ENCODE measurements at regions of chr14 and their contacts with region 1.

Region 1: DNA sequence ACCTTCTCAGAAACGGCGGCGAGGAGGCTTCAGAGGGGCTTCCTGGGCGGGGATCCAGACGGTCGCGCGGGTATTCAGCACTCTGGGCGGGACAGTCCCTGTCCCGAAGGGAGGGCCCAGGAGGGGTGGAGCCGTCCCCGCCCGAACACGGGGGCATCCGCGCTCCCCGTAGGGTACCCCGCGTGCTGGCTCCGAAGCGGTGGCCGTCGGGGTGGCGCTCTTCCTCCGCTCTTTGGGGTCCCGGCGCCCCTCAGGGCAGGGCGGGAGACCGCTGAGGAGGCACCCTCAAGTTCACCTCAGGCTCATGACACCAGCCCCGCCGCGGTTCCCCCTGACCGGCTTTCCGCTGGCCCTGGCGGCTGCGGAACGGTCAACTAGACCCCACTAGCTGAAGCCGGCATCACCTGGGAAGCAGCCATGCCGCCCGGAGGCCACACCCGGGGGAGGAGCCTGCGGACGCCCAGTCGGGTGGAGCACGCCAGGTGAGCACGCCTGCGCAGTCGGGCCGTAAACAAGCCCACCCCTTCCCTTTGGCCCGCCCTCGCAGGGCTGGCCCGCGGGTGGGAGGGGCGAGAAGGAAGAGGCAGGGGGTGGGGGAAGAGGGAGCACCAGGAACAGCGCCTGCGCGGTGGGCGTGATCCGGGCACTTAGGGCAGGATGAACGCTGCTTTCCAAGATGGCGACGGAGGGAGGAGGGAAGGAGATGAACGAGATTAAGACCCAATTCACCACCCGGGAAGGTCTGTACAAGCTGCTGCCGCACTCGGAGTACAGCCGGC is at the start of gene WDR20:
- DNase-seq: peak; percentile 99
- H3K4me3 Mint-ChIP-seq: peak within 1 kb of the TSS; percentile 95
- H3K27ac Mint-ChIP-seq: peak within 1 kb of the TSS; percentile 94
- H3K4me1 Mint-ChIP-seq: peaks cover 24% of the 10 kb centered on the region
- H3K27me3 Mint-ChIP-seq: no peaks in the 10 kb centered on the region
- total RNA-seq, gene WDR20: 20.5 to 21.4 TPM

Region 2: GRCh38 chr14:101761032-101761880 is 378.2 kb before region 1 on chr14 and contains the start of gene PPP2R5C:
- CTCF ChIA-PET with region 1: no interaction called
- intact Hi-C with region 1: loop called (anchors 2 kb)
- DNase-seq: peak; percentile 85
- H3K4me3 Mint-ChIP-seq: peak within 1 kb of the TSS; percentile 91
- H3K27ac Mint-ChIP-seq: peak within 1 kb of the TSS; percentile 79
- H3K4me1 Mint-ChIP-seq: peaks cover 42% of the 10 kb centered on the region
- H3K27me3 Mint-ChIP-seq: no peaks in the 10 kb centered on the region
- total RNA-seq, gene PPP2R5C: 280 to 294 TPM

Region 3: DNA sequence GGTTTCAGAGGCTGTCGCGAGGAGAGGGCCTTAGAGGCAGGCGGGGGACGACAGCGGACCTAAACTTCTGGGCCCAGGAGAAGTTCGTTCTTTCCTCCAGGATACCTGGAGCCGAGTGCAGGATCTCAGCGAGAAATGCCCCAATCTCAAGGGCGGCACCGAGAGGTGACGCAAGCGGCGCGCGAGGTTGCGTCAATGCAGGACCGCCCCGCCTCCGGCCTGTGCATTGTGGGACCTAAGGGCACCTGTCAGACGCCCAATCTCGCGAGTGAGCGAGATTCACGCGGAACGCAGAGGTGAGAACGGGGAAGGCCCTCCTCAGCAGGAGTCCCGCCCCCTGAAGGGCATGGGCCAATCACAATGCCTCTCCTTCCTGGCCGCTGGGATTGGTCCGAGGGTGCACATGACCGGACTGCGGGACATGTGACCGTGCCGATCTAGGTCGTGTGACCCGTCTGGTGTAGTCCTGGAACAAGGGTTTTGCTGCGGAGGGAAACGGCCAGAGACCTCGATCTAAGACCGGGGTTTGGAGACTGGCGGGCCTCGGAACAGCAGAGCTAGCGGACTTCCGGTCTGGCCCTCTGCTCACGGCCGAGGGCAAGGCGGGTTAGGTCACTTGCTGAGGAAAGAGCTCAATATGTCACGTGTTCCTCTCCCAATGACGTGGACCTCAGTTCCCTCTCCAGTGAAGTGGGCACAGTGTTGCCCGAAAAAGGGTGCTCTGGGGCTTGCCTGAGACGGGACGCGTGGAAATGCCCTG is 191.4 kb before region 1 on chr14:
- CTCF ChIA-PET with region 1: no interaction called
- intact Hi-C with region 1: loop called (anchors 1 kb)
- DNase-seq: peak; percentile 100
- H3K4me3 Mint-ChIP-seq: peak overlapping the region; percentile 98
- H3K27ac Mint-ChIP-seq: peak overlapping the region; percentile 97
- H3K4me1 Mint-ChIP-seq: peaks cover 18% of the 10 kb centered on the region
- H3K27me3 Mint-ChIP-seq: peaks cover 20% of the 10 kb centered on the region

Region 4: GRCh38 chr14:102200690-102201352 is 61.4 kb after region 1 on chr14:
- CTCF ChIA-PET with region 1: no interaction called
- intact Hi-C with region 1: loop called (anchors 1 kb)
- DNase-seq: peak; percentile 20
- H3K4me3 Mint-ChIP-seq: no peak overlapping the region
- H3K27ac Mint-ChIP-seq: peak overlapping the region; percentile 2
- H3K4me1 Mint-ChIP-seq: peaks cover 61% of the 10 kb centered on the region
- H3K27me3 Mint-ChIP-seq: no peaks in the 10 kb centered on the region

Region 5: DNA sequence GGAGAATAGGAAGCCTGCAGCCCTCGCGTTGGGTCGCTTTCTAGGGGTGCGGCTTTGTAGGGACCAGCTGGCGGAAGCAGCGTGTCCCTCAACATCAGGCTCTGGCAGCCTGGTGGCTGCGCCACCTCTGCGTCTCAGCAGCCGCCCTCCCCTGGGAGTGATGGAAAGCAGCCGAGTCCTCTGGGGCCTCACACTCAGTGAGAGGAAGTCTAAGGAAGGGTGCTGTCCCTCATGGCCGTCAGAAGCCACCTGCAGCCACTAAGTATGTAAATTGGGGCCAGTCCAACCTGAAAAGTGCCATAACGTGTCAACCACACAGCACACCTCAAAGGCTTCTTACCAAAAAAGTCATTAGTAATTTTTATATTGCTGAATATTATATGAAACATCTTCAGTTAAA is 80.6 kb after region 1 on chr14:
- CTCF ChIA-PET with region 1: interaction called, 3 read pairs
- intact Hi-C with region 1: loop called (anchors 1 kb)
- DNase-seq: peak; percentile 69
- H3K4me3 Mint-ChIP-seq: no peak overlapping the region
- H3K27ac Mint-ChIP-seq: no peak overlapping the region
- H3K4me1 Mint-ChIP-seq: peaks cover 13% of the 10 kb centered on the region
- H3K27me3 Mint-ChIP-seq: no peaks in the 10 kb centered on the region

Region 6: DNA sequence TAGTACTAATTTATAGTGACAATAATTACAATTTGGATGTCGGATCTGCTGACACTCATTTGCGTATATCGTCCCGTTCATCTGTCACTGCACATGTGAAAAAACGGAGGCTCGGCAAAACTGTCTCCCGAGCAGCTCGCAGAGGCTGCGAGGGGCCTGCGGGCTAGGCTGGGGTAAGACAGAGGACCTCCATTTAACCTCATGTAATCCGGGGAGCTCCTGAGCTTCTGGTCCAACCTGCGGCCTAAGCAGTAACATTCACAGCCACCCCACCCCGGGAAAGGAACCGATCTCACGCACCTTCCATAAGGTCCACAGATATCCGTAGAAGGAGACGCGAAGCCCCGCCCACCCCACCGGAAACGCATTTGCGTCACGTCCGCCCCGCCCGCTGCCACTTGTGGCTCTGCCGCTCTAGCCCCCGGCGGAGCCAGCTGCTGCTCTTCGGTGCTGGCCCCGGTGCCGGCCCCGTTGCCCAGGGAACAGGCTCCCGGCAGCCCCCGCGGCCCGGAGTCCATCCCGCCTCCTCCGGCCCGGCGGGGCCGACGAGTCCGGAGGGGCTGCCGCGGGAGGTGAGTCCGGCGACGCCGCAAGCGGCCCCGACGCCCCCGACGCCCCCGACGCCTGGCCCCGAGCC is 223.2 kb after region 1 on chr14 and contains the starts of genes CINP and TECPR2:
- CTCF ChIA-PET with region 1: no interaction called
- intact Hi-C with region 1: loop called (anchors 2 kb)
- DNase-seq: peak; percentile 99
- H3K4me3 Mint-ChIP-seq: no peak within 1 kb of the TSS
- H3K27ac Mint-ChIP-seq: peak within 1 kb of the TSS; percentile 94
- H3K4me1 Mint-ChIP-seq: peaks cover 30% of the 10 kb centered on the region
- H3K27me3 Mint-ChIP-seq: no peaks in the 10 kb centered on the region
- total RNA-seq, gene CINP: 45.3 to 46.2 TPM
- total RNA-seq, gene TECPR2: 2.3 to 3.6 TPM

Measured in activated naive CD4-positive, alpha-beta T cell treated with anti-CD3 and anti-CD28 coated beads for 36 hours (primary cell).